ENCODE measurements at regions of chr1 and their contacts with region 1.

Region 1: GRCh38 chr1:50978144-50978851 is 8.3 kb downstream of the CDKN2C start:
- DNase-seq: peak; percentile 87

Region 2: DNA sequence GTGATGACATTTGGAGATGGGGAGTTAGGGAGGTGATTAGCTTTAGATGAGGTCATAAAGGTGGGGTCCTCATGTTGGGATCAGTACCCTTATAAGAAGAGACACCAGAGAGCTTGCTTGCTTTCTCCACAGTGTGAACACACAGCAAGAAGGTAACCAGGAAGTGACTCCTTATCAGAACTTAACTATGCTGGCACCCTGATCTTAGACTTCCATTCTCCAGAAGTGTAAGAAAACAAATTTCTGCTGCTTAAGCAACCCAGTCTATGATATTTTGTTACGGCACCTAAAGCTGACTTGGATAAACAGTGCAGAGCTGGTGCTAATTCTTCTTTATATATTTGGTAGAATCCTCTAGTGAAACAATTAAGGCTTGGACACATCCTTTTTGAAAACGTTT is 1300.6 kb before region 1 on chr1:
- intact Hi-C with region 1: no loop called
- DNase-seq: no peak

Region 3: GRCh38 chr1:50950396-50950795 is 27.9 kb before region 1 on chr1:
- intact Hi-C with region 1: no loop called
- DNase-seq: no peak

Region 4: GRCh38 chr1:50968158-50968820 is 10.0 kb before region 1 on chr1:
- intact Hi-C with region 1: loop called (anchors 1 kb)
- DNase-seq: peak; percentile 97

Measured in cardiac septum (tissue), 1 donor.